CD4-positive, alpha-beta memory T cell (primary cell): ENCODE measurements at regions of chr5 and their contacts with region 1.

Region 1: GRCh38 chr5:151223469-151224264 is at the start of gene CCDC69:
- DNase-seq: peak; percentile 42 to 57 (median 47)
- H3K4me3 ChIP-seq: peak within 1 kb of the TSS; percentile 59 to 88
- H3K4me3 Mint-ChIP-seq: peak within 1 kb of the TSS; percentile 85 to 97 (median 92)
- H3K27ac ChIP-seq: peak within 1 kb of the TSS; percentile 96
- H3K27ac Mint-ChIP-seq: peak within 1 kb of the TSS; percentile 93 to 96 (median 95)
- H3K4me1 ChIP-seq: peaks cover 68% of the 10 kb centered on the region
- H3K4me1 Mint-ChIP-seq: peaks cover 46 to 67% (median 56%) of the 10 kb centered on the region in 4 donors
- H3K27me3 ChIP-seq: no peaks in the 10 kb centered on the region
- H3K27me3 Mint-ChIP-seq: no peaks in the 10 kb centered on the region
- total RNA-seq, gene CCDC69: 93.5 to 93.9 TPM

Region 2: DNA sequence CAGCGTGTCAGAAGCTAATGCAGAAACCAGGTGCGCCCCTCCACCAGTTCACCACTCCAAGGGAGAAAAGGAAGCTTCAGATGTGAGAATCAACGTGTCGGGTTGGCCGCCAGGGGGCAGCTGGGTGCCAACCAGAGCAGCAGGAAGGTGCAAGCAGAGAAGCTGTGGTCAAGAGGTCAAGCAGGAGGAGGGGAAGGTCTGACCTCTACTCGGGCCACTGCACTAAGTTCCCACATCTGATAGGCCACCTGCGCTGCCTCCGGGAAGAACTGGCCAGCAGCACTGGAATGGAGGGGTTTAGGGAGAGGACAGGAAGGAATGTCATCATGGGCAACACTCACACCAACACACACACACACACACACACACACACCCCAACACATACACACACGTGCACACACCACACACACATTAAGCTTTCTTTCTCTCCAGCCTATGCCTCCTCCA is 97.4 kb before region 1 on chr5:
- CTCF ChIA-PET with region 1: interaction called, 27 read pairs
- POLR2A ChIA-PET with region 1: interaction called, 13 read pairs
- intact Hi-C with region 1: no loop called
- DNase-seq: peak in 4 of 5 donors; percentile 65 to 73 (median 66)
- H3K4me3 ChIP-seq: no peak overlapping the region
- H3K4me3 Mint-ChIP-seq: peak overlapping the region in 4 of 8 donors; percentile 43 to 54 (median 52)
- H3K27ac ChIP-seq: peak overlapping the region; percentile 47
- H3K27ac Mint-ChIP-seq: peak overlapping the region; percentile 78 to 96 (median 91)
- H3K4me1 ChIP-seq: peaks cover 35% of the 10 kb centered on the region
- H3K4me1 Mint-ChIP-seq: peaks cover 30 to 54% (median 43%) of the 10 kb centered on the region in 4 donors
- H3K27me3 ChIP-seq: no peaks in the 10 kb centered on the region
- H3K27me3 Mint-ChIP-seq: no peaks in the 10 kb centered on the region

Region 3: DNA sequence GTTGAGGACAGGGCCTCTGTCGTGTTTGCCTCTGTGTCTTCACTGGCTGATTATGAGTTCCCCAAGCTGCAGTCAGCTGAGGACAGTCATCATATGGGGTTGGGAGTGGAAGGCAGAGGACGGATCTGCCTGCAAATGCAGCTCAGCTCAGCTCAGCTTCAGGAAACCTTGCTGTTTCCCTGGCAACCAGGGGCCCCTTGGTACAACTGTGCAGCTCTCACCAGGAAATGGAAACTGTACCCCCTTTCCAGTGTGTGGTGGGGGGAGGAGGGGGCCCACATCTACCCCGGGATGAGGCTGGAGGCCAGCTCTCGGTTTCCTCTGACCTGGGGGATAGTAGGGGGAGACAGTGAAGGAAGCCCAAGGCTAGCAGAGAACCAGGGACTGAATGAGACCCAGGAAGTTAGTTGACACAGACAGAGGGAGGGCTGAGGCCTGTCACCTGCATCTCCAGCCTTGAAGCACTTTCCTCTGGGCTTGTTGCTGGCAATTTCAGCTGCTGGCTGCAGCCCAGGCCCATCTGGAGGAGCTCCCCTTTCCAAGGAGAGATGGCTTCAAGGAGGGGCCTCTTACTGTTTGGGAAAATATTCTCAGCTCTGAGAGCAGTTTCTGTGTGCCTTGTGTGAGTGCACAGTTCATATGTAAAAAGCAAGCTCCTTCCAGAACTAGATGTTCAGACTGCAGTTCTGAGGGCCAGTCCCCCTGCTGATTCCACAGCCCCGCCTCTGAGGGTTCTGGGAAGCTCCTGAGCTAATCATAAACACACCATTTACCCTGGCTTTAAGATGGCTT is 73.0 kb before region 1 on chr5:
- CTCF ChIA-PET with region 1: no interaction called
- POLR2A ChIA-PET with region 1: interaction called, 17 read pairs
- intact Hi-C with region 1: no loop called
- DNase-seq: peak; percentile 81 to 94 (median 83)
- H3K4me3 ChIP-seq: peak overlapping the region; percentile 1 to 38
- H3K4me3 Mint-ChIP-seq: peak overlapping the region; percentile 60 to 98 (median 86)
- H3K27ac ChIP-seq: peak overlapping the region; percentile 84
- H3K27ac Mint-ChIP-seq: peak overlapping the region; percentile 94 to 99 (median 96)
- H3K4me1 ChIP-seq: peaks cover 100% of the 10 kb centered on the region
- H3K4me1 Mint-ChIP-seq: peaks cover 78 to 100% (median 90%) of the 10 kb centered on the region in 4 donors
- H3K27me3 ChIP-seq: no peaks in the 10 kb centered on the region
- H3K27me3 Mint-ChIP-seq: no peaks in the 10 kb centered on the region

Region 4: GRCh38 chr5:151164686-151165392 is 58.8 kb before region 1 on chr5:
- CTCF ChIA-PET with region 1: interaction called, 34 read pairs
- POLR2A ChIA-PET with region 1: interaction called, 17 read pairs
- intact Hi-C with region 1: loop called (anchors 5 kb)
- DNase-seq: peak; percentile 78 to 84 (median 81)
- H3K4me3 ChIP-seq: no peak overlapping the region
- H3K4me3 Mint-ChIP-seq: peak overlapping the region in 1 of 8 donors; percentile 4
- H3K27ac ChIP-seq: no peak overlapping the region
- H3K27ac Mint-ChIP-seq: peak overlapping the region in 5 of 7 donors; percentile 10 to 75 (median 52)
- H3K4me1 ChIP-seq: no peaks in the 10 kb centered on the region
- H3K4me1 Mint-ChIP-seq: peaks cover 14 to 22% (median 19%) of the 10 kb centered on the region in 4 donors
- H3K27me3 ChIP-seq: no peaks in the 10 kb centered on the region
- H3K27me3 Mint-ChIP-seq: no peaks in the 10 kb centered on the region

Region 5: DNA sequence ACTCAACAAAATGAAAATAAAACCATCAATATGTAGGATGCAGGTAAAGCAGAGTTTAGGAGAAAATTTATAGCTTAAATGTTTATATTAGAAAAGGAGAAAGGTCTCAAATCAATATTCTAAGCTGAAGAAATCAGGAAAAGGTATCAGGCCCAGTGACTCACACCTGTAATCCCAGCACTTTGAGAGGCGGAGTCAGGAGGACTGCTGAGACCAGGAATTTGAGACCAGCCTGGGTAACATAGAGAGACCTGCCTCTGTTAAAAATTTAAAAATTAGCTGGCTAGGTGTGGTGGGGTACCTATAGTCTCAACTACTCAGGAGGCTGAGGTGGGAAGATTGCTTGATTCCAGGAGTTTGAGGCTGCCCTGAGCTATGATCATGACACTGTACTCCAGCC is 32.0 kb before region 1 on chr5:
- CTCF ChIA-PET with region 1: interaction called, 9 read pairs
- POLR2A ChIA-PET with region 1: interaction called, 12 read pairs
- intact Hi-C with region 1: no loop called
- DNase-seq: no peak
- H3K4me3 ChIP-seq: no peak overlapping the region
- H3K4me3 Mint-ChIP-seq: peak overlapping the region in 3 of 8 donors; percentile 0 to 68 (median 4)
- H3K27ac ChIP-seq: no peak overlapping the region
- H3K27ac Mint-ChIP-seq: peak overlapping the region in 4 of 7 donors; percentile 19 to 52 (median 39)
- H3K4me1 ChIP-seq: peaks cover 18% of the 10 kb centered on the region
- H3K4me1 Mint-ChIP-seq: peaks cover 32 to 68% (median 56%) of the 10 kb centered on the region in 4 donors
- H3K27me3 ChIP-seq: no peaks in the 10 kb centered on the region
- H3K27me3 Mint-ChIP-seq: no peaks in the 10 kb centered on the region

Region 6: DNA sequence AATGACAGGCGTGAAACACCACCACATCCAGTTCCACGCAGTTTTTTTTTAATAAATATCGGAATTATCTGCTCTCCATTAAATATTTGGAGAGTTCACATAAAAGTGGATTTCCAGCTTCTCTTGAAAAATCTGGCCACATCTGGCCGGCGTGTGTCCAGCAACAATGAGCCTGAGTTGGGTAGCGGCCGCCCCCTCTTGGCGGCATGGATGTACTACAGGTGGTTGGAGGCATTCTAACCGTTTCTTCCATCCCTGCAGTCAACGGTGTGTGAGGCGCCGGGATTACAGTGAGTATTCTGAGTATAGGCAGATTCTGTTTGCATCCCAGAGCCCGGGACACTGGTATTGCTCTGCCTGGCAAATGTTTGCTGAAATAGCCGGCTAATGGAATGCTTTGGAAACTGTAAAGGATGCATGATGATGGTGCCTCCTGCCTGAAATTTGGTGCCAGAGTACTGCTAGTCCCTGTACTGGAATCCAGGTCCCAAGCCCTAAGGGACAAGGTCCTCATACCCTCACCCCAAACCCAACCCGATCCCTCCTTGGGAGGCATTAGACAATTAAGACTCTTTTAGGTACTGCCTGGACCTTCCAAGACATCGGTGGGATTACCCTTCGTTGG is 15.7 kb after region 1 on chr5:
- CTCF ChIA-PET with region 1: interaction called, 149 read pairs
- POLR2A ChIA-PET with region 1: interaction called, 46 read pairs
- intact Hi-C with region 1: loop called (anchors 1 kb)
- DNase-seq: peak in 4 of 5 donors; percentile 40 to 60 (median 48)
- H3K4me3 ChIP-seq: no peak overlapping the region
- H3K4me3 Mint-ChIP-seq: no peak overlapping the region
- H3K27ac ChIP-seq: no peak overlapping the region
- H3K27ac Mint-ChIP-seq: peak overlapping the region in 3 of 7 donors; percentile 35 to 81 (median 61)
- H3K4me1 ChIP-seq: peaks cover 28% of the 10 kb centered on the region
- H3K4me1 Mint-ChIP-seq: peaks cover 17 to 24% (median 18%) of the 10 kb centered on the region in 4 donors
- H3K27me3 ChIP-seq: no peaks in the 10 kb centered on the region
- H3K27me3 Mint-ChIP-seq: no peaks in the 10 kb centered on the region

Region 7: GRCh38 chr5:151315998-151316597 is 92.4 kb after region 1 on chr5:
- CTCF ChIA-PET with region 1: no interaction called
- POLR2A ChIA-PET with region 1: no interaction called
- intact Hi-C with region 1: loop called (anchors 5 kb)
- DNase-seq: peak in 4 of 5 donors; percentile 2 to 19 (median 12)
- H3K4me3 ChIP-seq: no peak overlapping the region
- H3K4me3 Mint-ChIP-seq: no peak overlapping the region
- H3K27ac ChIP-seq: no peak overlapping the region
- H3K27ac Mint-ChIP-seq: no peak overlapping the region
- H3K4me1 ChIP-seq: no peaks in the 10 kb centered on the region
- H3K4me1 Mint-ChIP-seq: peaks cover 0 to 4% (median 1%) of the 10 kb centered on the region in 4 donors
- H3K27me3 ChIP-seq: no peaks in the 10 kb centered on the region
- H3K27me3 Mint-ChIP-seq: peaks cover 8 to 11% of the 10 kb centered on the region in 2 donors